ENCODE measurements at regions of chr7 and their contacts with region 1.

Region 1: GRCh38 chr7:6495597-6496262 is 48.0 kb upstream of the DAGLB start:
- DNase-seq: no peak
- H3K4me3 ChIP-seq: no peak overlapping the region
- H3K27ac ChIP-seq: no peak overlapping the region
- H3K4me1 ChIP-seq: no peaks in the 10 kb centered on the region
- H3K27me3 ChIP-seq: no peaks in the 10 kb centered on the region
- CTCF ChIP-seq: no peak

Region 2: DNA sequence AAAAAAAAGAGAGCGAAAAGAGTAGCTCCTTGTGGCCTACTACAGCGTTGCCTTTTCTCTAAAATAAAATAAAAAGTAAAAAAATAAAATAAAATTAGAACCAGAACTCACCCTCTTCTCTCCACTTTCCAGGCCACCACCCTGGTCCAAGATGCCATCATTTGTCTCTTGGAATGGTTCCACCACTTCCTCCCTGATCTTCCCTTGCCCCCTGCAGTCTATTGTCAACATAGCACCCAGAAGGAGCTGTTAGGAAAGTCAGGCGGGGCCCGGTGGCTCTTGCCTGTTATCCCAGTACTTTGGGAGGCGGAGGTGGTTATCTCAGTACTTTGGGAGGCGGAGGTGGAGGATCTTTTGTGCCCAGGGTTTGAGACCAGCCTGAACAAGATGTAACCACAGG is 63.1 kb after region 1 on chr7:
- CTCF ChIA-PET with region 1: interaction called, 14 read pairs
- dilution Hi-C with region 1: no loop called
- in situ Hi-C with region 1: no loop called
- intact Hi-C with region 1: no loop called
- DNase-seq: peak; percentile 22
- H3K4me3 ChIP-seq: no peak overlapping the region
- H3K27ac ChIP-seq: no peak overlapping the region
- H3K4me1 ChIP-seq: no peaks in the 10 kb centered on the region
- H3K27me3 ChIP-seq: no peaks in the 10 kb centered on the region
- CTCF ChIP-seq: peak; percentile 17 to 55